Activated CD4-positive, alpha-beta T cell treated with anti-CD3 and anti-CD28 coated beads for 36 hours (primary cell): ENCODE measurements at regions of chr17 and their contacts with region 1.

Region 1: GRCh38 chr17:13106171-13106570 is 88.3 kb upstream of the ELAC2 start:
- DNase-seq: no peak
- ATAC-seq: no peak
- H3K4me3 Mint-ChIP-seq: no peak overlapping the region
- H3K27ac Mint-ChIP-seq: no peak overlapping the region
- H3K4me1 Mint-ChIP-seq: no peaks in the 10 kb centered on the region
- H3K27me3 Mint-ChIP-seq: no peaks in the 10 kb centered on the region

Region 2: DNA sequence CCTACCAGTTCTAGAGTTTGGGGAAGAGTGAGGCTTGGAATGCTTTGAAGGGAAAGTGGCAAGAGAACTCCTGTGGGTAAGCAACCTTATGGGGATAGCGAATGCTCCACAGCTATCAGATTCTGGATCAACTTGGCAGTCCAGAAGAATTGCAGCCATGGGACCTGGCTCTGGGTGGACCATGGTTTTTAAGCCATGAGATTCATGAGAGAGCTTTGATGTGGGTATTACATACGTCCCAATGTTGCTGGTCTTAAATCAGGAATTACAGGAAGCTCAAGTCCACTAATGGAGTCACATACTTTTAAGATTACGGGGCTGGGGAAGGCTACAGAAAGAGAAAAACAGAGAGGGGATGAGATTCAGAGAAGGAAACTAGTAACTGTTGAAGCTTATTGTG is 54.1 kb after region 1 on chr17:
- CTCF ChIA-PET with region 1: no interaction called
- POLR2A ChIA-PET with region 1: no interaction called
- intact Hi-C with region 1: loop called in 1 of 2 experiments (anchors 10 kb)
- DNase-seq: no peak
- ATAC-seq: no peak
- H3K4me3 Mint-ChIP-seq: no peak overlapping the region
- H3K27ac Mint-ChIP-seq: no peak overlapping the region
- H3K4me1 Mint-ChIP-seq: no peaks in the 10 kb centered on the region
- H3K27me3 Mint-ChIP-seq: no peaks in the 10 kb centered on the region

Region 3: DNA sequence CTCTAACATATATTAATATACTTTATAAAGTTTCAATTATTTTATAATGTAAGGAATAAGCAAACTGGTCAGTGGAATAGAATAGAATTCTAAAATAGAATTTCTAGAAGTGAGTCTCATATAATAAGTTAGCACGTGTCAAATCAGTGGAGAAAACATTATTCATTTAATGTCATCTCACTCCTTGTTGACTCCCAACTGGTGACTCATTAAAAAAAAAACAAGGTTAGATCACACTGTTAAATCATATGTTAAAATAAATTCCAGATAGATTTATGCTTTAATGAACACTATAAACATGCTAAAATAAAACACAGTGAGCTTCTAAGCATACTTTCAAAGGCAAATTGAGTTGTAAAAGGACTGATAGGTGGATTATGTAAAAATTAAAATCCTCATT is 81.5 kb after region 1 on chr17:
- CTCF ChIA-PET with region 1: no interaction called
- POLR2A ChIA-PET with region 1: no interaction called
- intact Hi-C with region 1: no loop called
- DNase-seq: no peak
- ATAC-seq: no peak
- H3K4me3 Mint-ChIP-seq: no peak overlapping the region
- H3K27ac Mint-ChIP-seq: no peak overlapping the region
- H3K4me1 Mint-ChIP-seq: no peaks in the 10 kb centered on the region
- H3K27me3 Mint-ChIP-seq: no peaks in the 10 kb centered on the region